Activated CD4-positive, alpha-beta T cell treated with anti-CD3 and anti-CD28 coated beads for 36 hours (primary cell): ENCODE measurements at regions of chr9 and their contacts with region 1.

Region 1: DNA sequence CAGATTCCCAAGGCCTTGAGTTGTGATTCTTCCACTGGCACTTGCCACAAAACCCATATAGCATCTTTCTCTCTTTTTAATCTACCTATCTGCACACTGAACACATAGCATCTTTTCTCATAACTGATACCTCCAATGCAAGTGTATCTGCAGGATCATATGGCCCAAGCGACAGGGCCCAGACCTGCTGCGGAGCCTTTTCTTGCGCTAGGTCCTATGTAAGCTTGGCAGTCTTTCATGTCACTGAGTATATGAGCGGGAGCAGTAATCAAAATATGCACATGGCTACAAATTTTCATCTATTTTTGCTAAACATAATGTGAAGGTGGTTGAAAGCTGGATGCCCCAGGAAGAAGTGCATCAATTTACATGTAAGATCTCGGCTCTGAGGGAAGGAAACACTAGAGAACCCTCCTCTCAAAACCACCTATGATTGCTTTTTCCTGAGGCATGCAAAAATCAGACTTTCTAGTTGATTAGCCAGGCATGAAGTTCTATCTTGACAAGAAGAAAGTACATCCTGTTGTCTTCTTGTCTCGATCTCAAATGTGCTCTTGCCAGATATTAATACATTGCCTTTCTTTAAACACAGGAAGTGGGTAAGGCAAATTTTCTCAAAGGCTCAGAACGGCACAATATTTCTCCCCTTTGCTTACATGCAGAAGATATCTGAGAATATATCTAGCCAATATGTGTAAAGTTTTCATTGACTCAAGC is 26.9 kb upstream of the CEMIP2 start:
- DNase-seq: peak; percentile 20
- ATAC-seq: peak; percentile 68
- H3K4me3 Mint-ChIP-seq: peak overlapping the region; percentile 34
- H3K27ac Mint-ChIP-seq: peak overlapping the region; percentile 84
- H3K4me1 Mint-ChIP-seq: peaks cover 60% of the 10 kb centered on the region
- H3K27me3 Mint-ChIP-seq: no peaks in the 10 kb centered on the region

Region 2: DNA sequence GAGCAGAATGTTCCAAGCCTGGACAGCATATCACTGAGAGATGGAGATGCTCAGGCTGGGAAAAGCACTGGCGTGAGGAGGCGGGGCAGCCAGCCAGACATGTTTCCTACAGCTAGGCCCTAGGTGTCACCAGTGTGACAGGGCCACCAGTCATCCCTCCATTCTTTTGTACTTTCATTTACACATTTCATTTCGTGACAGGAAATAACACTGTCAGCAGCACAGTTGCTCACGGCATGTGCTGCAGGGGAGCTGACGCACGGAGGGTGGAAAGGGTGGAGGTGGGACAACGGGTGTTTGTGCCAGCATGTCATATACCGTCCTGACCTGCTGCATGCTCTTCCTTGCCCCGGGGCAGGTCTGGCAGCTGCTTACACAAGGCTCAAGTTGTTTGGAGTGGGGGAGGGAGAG is 12.1 kb before region 1 on chr9:
- CTCF ChIA-PET with region 1: interaction called, 7 read pairs
- POLR2A ChIA-PET with region 1: no interaction called
- intact Hi-C with region 1: loop called (anchors 1 kb)
- DNase-seq: peak; percentile 93
- ATAC-seq: peak; percentile 97
- H3K4me3 Mint-ChIP-seq: peak overlapping the region; percentile 68
- H3K27ac Mint-ChIP-seq: peak overlapping the region; percentile 98
- H3K4me1 Mint-ChIP-seq: peaks cover 48% of the 10 kb centered on the region
- H3K27me3 Mint-ChIP-seq: no peaks in the 10 kb centered on the region